WTC11 (cell line): ENCODE measurements at regions of chr15 and their contacts with region 1.

Region 1: DNA sequence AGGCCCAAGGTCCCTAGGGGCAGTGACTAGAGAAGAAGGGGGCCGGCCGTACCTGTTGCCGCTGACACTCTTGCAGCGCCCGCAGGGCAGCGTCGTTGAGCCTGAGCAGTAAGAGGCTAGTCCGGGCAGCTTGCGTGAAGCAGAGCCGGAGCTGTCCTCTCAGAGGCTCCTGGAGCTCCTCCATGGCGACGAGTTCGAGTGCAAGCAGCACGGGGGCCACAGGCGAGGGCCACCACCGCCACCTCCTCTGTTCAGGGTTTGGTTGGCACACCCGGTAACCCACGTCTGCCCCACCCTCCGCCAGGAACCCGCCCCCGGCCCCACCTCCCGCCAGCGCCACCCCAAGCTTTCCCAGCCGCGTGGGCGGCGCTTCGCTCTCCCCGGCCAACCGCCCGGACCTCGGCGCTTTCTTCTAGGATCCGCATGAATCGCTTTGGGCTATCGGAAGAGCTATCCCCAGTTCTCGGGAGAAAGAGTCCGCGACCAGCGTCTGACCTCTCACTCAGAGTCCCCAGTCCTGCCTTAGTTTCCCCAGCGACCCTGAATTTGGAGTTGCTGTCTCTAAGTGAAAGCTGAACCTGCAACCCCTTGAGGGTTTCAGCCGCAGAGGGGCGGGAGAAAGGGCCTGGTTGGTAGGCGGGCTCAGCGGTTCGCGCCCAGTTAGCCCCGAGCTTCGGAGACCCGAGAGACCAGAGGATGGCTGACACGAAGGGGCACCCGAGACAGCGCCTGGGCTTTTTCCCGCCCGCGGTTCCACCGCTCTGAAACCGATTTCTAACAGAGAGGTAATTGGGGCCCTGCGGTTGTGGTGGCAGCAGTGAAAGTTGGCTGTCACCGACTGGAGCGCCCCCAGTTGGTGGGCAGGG is at the start of gene ELL3:
- DNase-seq: peak; percentile 82
- ATAC-seq: peak; percentile 56
- H3K4me3 Mint-ChIP-seq: peak within 1 kb of the TSS; percentile 84
- H3K27ac Mint-ChIP-seq: peak within 1 kb of the TSS; percentile 74; the same call in 1 of the 2 replicates
- H3K4me1 Mint-ChIP-seq: peaks cover 13% of the 10 kb centered on the region
- H3K27me3 Mint-ChIP-seq: no peaks in the 10 kb centered on the region; the same call in 1 of the 2 replicates
- CTCF ChIP-seq: peak; percentile 64
- total RNA-seq, gene ELL3: 8.1 to 9.0 TPM (median 8.8 TPM) in 3 replicates

Region 2: DNA sequence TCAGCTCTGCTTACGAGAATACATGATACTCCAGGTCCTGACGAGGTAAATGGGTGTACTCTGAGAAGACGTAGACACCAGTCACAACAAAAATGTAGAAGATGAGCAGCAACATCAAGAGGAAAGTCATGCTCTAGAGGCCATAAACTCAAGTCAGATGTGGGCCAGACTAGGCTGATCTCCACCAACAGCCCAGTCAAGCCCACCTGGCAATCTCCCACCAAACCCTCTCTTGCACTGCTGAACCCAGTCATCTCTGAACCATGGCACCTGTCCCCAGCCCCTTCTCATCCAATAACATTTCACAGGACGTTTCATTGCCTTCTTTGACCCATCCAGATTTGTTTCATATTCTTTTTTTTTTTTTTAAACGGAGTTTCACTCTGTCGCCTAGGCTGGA is 41.5 kb before region 1 on chr15:
- CTCF ChIA-PET with region 1: no interaction called
- POLR2A ChIA-PET with region 1: no interaction called
- DNase-seq: no peak
- ATAC-seq: no peak
- H3K4me3 Mint-ChIP-seq: no peak overlapping the region
- H3K27ac Mint-ChIP-seq: no peak overlapping the region
- H3K4me1 Mint-ChIP-seq: no peaks in the 10 kb centered on the region
- H3K27me3 Mint-ChIP-seq: peaks cover 11% of the 10 kb centered on the region
- CTCF ChIP-seq: no peak

Region 3: DNA sequence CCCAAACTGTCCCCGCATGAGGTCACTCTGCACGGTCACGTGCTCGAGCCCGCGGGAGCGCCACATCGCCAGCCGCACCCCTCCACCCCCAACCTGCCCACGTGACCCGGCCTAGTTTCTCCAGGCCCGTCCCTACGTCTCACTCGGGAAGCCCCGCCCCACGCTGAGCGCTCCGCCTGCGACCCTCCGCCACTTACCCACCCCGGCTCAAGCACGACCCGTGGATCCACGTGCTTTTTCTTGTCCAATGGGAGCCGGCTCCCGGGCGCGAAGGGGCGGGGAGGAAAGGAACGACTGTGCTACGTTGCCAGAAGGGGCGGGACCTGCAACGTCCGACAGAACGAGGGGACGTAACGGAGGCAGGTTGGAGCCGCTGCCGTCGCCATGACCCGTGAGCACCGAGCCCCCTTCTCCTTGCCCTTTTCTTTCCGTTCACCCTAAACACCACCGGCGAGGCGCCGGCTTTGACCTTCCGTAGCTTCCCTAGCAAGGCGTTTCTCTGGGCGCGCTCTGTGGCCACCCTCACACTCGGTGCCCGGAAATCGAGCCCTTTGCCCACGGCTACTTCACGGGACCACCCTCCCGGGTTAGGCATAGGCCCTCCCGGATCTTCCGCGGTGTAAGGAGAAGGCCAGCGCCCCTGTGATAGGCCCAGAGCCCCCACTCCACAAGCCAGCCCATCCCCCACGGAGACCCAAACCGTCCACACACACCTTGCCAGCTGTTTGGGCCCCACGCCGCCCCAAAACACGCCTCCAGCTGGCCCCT is 15.2 kb after region 1 on chr15 and contains the start of gene SERF2:
- CTCF ChIA-PET with region 1: interaction called, 75 read pairs
- POLR2A ChIA-PET with region 1: interaction called, 8 read pairs
- DNase-seq: peak; percentile 100
- ATAC-seq: peak; percentile 94
- H3K4me3 Mint-ChIP-seq: peak within 1 kb of the TSS; percentile 97
- H3K27ac Mint-ChIP-seq: peak within 1 kb of the TSS; percentile 98
- H3K4me1 Mint-ChIP-seq: peaks cover 43% of the 10 kb centered on the region
- H3K27me3 Mint-ChIP-seq: no peaks in the 10 kb centered on the region
- CTCF ChIP-seq: no peak
- total RNA-seq, gene SERF2: 694 to 788 TPM (median 775 TPM) in 3 replicates

Region 4: GRCh38 chr15:43800286-43801141 is 23.6 kb after region 1 on chr15 and contains the start of gene HYPK:
- CTCF ChIA-PET with region 1: interaction called, 75 read pairs
- POLR2A ChIA-PET with region 1: interaction called, 12 read pairs
- DNase-seq: peak; percentile 89
- ATAC-seq: peak; percentile 86
- H3K4me3 Mint-ChIP-seq: peak within 1 kb of the TSS; percentile 99
- H3K27ac Mint-ChIP-seq: peak within 1 kb of the TSS; percentile 99
- H3K4me1 Mint-ChIP-seq: peaks cover 38% of the 10 kb centered on the region
- H3K27me3 Mint-ChIP-seq: no peaks in the 10 kb centered on the region
- CTCF ChIP-seq: no peak
- total RNA-seq, gene HYPK: 17.3 to 22.0 TPM (median 19.9 TPM) in 3 replicates

Region 5: GRCh38 chr15:43881944-43882343 is 105.0 kb after region 1 on chr15:
- CTCF ChIA-PET with region 1: no interaction called
- POLR2A ChIA-PET with region 1: no interaction called
- DNase-seq: peak; percentile 67
- ATAC-seq: peak; percentile 89
- H3K4me3 Mint-ChIP-seq: no peak overlapping the region
- H3K27ac Mint-ChIP-seq: peak overlapping the region; percentile 7; the same call in 1 of the 2 replicates
- H3K4me1 Mint-ChIP-seq: peaks cover 16% of the 10 kb centered on the region
- H3K27me3 Mint-ChIP-seq: no peaks in the 10 kb centered on the region
- CTCF ChIP-seq: peak; percentile 50